A673 (cell line): ENCODE measurements at regions of chr20 and their contacts with region 1.

Region 1: GRCh38 chr20:13819885-13820645 is 35.2 kb downstream of the NDUFAF5 start:
- DNase-seq: peak; percentile 53
- H3K4me3 ChIP-seq: no peak overlapping the region
- H3K27ac ChIP-seq: no peak overlapping the region
- H3K4me1 ChIP-seq: no peaks in the 10 kb centered on the region
- H3K27me3 ChIP-seq: no peaks in the 10 kb centered on the region
- CTCF ChIP-seq: peak; percentile 67

Region 2: DNA sequence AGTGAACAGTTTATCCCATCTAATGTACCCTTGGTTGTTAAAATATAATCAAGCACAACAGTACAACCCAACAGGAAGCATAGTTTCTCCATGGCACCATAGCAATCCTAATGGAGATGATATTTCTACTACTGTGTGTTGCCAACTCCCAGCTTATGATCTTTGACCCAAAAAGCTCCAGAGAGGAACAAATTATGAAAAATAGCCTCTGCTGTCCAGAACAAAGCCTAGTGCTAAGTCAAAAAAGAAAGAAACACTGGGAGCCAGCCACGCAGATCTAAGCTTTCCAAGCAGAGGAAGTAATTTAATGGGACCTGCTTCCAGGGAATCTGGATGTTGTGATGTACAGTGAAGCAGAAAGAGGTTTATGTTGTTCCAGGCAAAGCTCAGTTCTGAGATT is 129.1 kb before region 1 on chr20:
- CTCF ChIA-PET with region 1: no interaction called
- POLR2A ChIA-PET with region 1: no interaction called
- intact Hi-C with region 1: no loop called
- DNase-seq: no peak
- H3K4me3 ChIP-seq: no peak overlapping the region
- H3K27ac ChIP-seq: no peak overlapping the region
- H3K4me1 ChIP-seq: no peaks in the 10 kb centered on the region
- H3K27me3 ChIP-seq: no peaks in the 10 kb centered on the region
- CTCF ChIP-seq: no peak

Region 3: DNA sequence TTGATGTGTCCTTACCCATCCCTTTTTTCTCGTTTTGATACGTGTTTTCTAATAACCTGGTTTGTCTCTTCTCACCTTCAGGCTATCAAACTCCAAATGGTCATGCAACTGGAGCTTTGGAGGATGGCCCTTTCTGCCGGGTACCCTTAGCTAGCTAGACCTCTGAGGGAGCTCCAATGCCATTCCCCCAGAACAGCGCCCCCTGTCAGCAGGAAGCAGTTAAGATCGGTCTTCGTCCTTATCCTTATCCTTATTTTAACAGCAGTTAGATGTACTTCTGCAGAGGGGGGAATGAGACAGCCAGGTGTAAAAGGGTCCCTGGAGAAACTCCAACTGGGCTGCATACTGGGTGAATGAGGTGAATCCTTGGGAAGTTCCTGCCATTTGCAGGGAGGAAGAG is 133.2 kb after region 1 on chr20:
- CTCF ChIA-PET with region 1: no interaction called
- POLR2A ChIA-PET with region 1: no interaction called
- intact Hi-C with region 1: loop called (anchors 10 kb)
- DNase-seq: peak; percentile 18
- H3K4me3 ChIP-seq: no peak overlapping the region
- H3K27ac ChIP-seq: no peak overlapping the region
- H3K4me1 ChIP-seq: no peaks in the 10 kb centered on the region
- H3K27me3 ChIP-seq: no peaks in the 10 kb centered on the region
- CTCF ChIP-seq: peak; percentile 50